Endothelial cell of umbilical vein (primary cell): ENCODE measurements at regions of chr6 and their contacts with region 1.

Region 1: GRCh38 chr6:67068781-67069180 is 1361.8 kb upstream of the EYS start:
- DNase-seq: no peak
- H3K4me3 ChIP-seq: no peak overlapping the region
- H3K27ac ChIP-seq: no peak overlapping the region
- H3K4me1 ChIP-seq: no peaks in the 10 kb centered on the region
- H3K27me3 ChIP-seq: no peaks in the 10 kb centered on the region
- CTCF ChIP-seq: no peak
- POLR2A ChIP-seq: no peak

Region 2: GRCh38 chr6:68226460-68226859 is 1157.7 kb after region 1 on chr6:
- CTCF ChIA-PET with region 1: interaction called, 5 read pairs
- POLR2A ChIA-PET with region 1: no interaction called
- dilution Hi-C with region 1: no loop called
- intact Hi-C with region 1: loop called (anchors 5 kb)
- DNase-seq: no peak
- H3K4me3 ChIP-seq: no peak overlapping the region
- H3K27ac ChIP-seq: no peak overlapping the region
- H3K4me1 ChIP-seq: no peaks in the 10 kb centered on the region
- H3K27me3 ChIP-seq: no peaks in the 10 kb centered on the region
- CTCF ChIP-seq: no peak
- POLR2A ChIP-seq: no peak